Activated naive CD4-positive, alpha-beta T cell treated with anti-CD3 and anti-CD28 coated beads for 36 hours (primary cell): ENCODE measurements at regions of chr17 and their contacts with region 1.

Region 1: GRCh38 chr17:76623271-76624146 is 20.0 kb downstream of the ST6GALNAC1 start:
- DNase-seq: peak; percentile 83
- H3K4me3 Mint-ChIP-seq: no peak overlapping the region
- H3K27ac Mint-ChIP-seq: no peak overlapping the region
- H3K4me1 Mint-ChIP-seq: peaks cover 7% of the 10 kb centered on the region
- H3K27me3 Mint-ChIP-seq: peaks cover 7% of the 10 kb centered on the region

Region 2: DNA sequence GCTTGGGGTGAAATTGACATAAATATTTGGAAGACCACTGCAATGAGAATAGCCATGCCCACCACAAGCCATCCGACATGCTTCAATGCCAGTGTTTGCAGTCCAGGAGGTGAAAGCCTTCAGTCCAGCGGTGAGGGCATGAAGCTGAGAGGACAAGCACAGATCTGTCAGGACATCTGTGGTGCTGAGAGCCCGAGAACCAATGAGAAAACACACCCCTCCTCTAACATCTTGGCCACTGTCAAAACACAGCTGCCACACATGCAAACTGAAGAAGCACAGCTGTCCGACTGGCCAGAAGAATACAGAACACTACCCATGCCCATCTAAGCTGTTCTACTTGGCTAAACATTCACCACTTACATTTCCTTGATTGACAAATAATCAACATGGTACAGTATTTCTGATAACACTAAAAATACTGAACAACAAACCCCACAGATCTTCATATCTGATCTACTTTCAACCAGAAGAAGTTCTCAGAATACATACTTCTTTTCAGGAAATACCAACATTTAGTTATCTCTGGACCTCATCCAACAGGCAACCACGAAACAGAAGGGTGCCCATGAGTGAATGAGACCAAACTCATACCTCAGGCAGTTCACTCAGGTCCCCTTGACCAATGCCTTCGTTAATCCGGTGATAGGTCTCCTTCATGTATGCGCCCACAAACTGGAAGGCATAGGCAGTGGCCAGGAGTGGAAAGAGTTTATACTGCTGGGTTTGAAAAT is 672.5 kb before region 1 on chr17:
- CTCF ChIA-PET with region 1: no interaction called
- intact Hi-C with region 1: no loop called
- DNase-seq: no peak
- H3K4me3 Mint-ChIP-seq: no peak overlapping the region
- H3K27ac Mint-ChIP-seq: no peak overlapping the region
- H3K4me1 Mint-ChIP-seq: no peaks in the 10 kb centered on the region
- H3K27me3 Mint-ChIP-seq: no peaks in the 10 kb centered on the region

Region 3: DNA sequence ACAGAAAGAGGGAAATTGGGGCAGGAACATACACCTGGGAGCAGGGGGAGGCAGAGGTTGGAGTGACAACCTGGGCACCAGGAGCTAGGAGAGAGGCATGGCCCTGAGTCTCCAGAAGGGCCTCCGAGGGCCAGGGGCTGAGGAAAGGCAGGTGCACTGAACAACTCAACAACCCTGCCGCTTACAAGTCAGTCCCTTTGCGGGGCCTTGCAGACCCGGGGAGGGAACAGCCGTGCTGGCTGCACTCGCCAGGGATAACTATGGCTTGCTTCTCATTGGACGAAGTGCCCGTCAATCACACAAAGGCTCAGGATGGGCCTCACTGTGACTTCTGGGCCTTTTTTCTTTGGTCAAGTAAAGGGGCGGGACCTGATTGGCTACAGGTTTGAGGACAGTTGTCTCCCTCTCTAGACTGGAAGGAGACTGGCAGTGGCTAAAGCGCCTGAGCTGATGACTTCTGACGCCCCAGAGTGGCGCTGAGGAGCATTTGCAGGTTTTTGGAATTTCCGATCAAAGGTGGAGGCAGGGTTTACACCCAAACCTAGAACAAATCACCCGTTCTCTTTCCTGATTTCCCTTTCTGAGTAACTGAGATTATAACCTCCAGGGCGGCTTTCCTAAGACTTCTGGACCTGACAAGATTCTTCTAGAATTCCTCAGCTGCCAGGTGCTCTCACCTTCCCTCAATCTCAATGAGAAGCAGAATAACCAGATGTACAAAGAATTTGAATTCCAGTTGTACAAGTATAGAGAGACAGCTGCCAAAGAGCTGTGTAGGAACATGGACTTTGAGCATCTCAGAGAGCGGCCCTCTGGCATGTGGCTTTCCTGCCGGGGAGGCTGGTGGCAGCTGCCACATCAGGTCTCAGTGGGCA is 10.3 kb before region 1 on chr17:
- CTCF ChIA-PET with region 1: interaction called, 13 read pairs
- intact Hi-C with region 1: no loop called
- DNase-seq: no peak
- H3K4me3 Mint-ChIP-seq: no peak overlapping the region
- H3K27ac Mint-ChIP-seq: no peak overlapping the region
- H3K4me1 Mint-ChIP-seq: no peaks in the 10 kb centered on the region
- H3K27me3 Mint-ChIP-seq: no peaks in the 10 kb centered on the region